Calu3 (cell line): ENCODE measurements at regions of chr17 and their contacts with region 1.

Region 1: GRCh38 chr17:74379495-74380085 is 12.3 kb downstream of the GPR142 start:
- DNase-seq: peak; percentile 95
- H3K4me3 Mint-ChIP-seq: no peak overlapping the region
- H3K27ac Mint-ChIP-seq: no peak overlapping the region
- H3K4me1 Mint-ChIP-seq: peaks cover 18% of the 10 kb centered on the region
- H3K27me3 Mint-ChIP-seq: peaks cover 42% of the 10 kb centered on the region
- CTCF ChIP-seq: peak; percentile 93

Region 2: GRCh38 chr17:74368092-74369081 is 11.2 kb before region 1 on chr17:
- CTCF ChIA-PET with region 1: interaction called, 17 read pairs
- intact Hi-C with region 1: no loop called
- DNase-seq: peak; percentile 77
- H3K4me3 Mint-ChIP-seq: no peak overlapping the region
- H3K27ac Mint-ChIP-seq: no peak overlapping the region
- H3K4me1 Mint-ChIP-seq: no peaks in the 10 kb centered on the region
- H3K27me3 Mint-ChIP-seq: peaks cover 67% of the 10 kb centered on the region
- CTCF ChIP-seq: peak; percentile 91

Region 3: GRCh38 chr17:74457146-74457819 is 77.7 kb after region 1 on chr17:
- CTCF ChIA-PET with region 1: interaction called, 37 read pairs
- intact Hi-C with region 1: loop called (anchors 1 kb)
- DNase-seq: peak; percentile 78
- H3K4me3 Mint-ChIP-seq: no peak overlapping the region
- H3K27ac Mint-ChIP-seq: no peak overlapping the region
- H3K4me1 Mint-ChIP-seq: no peaks in the 10 kb centered on the region
- H3K27me3 Mint-ChIP-seq: peaks cover 47% of the 10 kb centered on the region
- CTCF ChIP-seq: peak; percentile 98

Region 4: DNA sequence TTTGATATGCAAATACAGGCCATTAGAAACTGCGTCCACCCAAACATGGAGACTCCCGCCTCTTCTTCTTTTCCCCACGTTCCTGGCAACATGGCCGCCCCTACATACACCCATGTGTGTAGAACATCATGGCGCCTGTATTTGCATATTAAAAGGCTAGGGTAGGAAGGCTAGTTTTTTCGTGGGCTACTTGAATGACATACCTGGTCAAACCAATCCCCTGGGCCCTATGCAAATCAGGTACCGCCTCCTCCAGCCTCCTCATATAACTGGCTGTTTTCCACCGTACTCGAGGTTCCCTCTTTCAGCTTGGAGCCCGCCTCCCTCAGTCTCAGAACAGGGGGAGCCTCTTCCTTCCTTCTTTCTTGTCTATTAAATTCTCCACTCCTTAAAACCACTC is 152.5 kb after region 1 on chr17:
- CTCF ChIA-PET with region 1: interaction called, 5 read pairs
- intact Hi-C with region 1: loop called (anchors 5 kb)
- DNase-seq: no peak
- H3K4me3 Mint-ChIP-seq: no peak overlapping the region
- H3K27ac Mint-ChIP-seq: no peak overlapping the region
- H3K4me1 Mint-ChIP-seq: no peaks in the 10 kb centered on the region
- H3K27me3 Mint-ChIP-seq: peaks cover 79% of the 10 kb centered on the region
- CTCF ChIP-seq: no peak